Activated B cell treated with CpG ODN at 0.5 μM for 24 hours (primary cell): ENCODE measurements at regions of chr1 and their contacts with region 1.

Region 1: GRCh38 chr1:28934676-28935075 is 20.3 kb downstream of the EPB41 start:
- DNase-seq: no peak
- ATAC-seq: no peak
- H3K4me3 Mint-ChIP-seq: no peak overlapping the region
- H3K27ac Mint-ChIP-seq: peak overlapping the region; percentile 72
- H3K4me1 Mint-ChIP-seq: peaks cover 66% of the 10 kb centered on the region
- H3K27me3 Mint-ChIP-seq: no peaks in the 10 kb centered on the region
- CTCF ChIP-seq: no peak

Region 2: DNA sequence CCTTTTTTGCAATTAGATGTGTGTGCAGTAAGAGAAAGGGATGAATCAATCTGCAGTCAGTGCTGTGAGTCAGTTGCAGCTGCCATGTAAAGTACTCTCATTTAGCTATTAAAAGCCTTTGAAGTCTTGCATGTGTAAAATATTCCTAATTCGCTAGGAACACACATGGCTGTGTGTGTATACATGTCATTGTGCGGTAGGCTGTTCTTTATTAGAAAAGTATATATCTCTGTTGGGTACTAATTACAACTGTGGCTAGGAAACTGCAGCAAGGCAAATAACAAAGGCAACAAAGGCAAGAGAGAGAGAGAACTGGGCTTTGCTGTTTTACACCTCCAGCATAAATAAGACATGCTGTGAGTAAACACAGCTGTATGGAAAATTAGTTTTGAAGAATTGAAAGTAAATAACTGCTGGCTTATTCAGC is 21.4 kb after region 1 on chr1:
- CTCF ChIA-PET with region 1: no interaction called
- POLR2A ChIA-PET with region 1: no interaction called
- intact Hi-C with region 1: loop called (anchors 2 kb)
- DNase-seq: no peak
- ATAC-seq: no peak
- H3K4me3 Mint-ChIP-seq: no peak overlapping the region
- H3K27ac Mint-ChIP-seq: no peak overlapping the region
- H3K4me1 Mint-ChIP-seq: peaks cover 19% of the 10 kb centered on the region
- H3K27me3 Mint-ChIP-seq: no peaks in the 10 kb centered on the region
- CTCF ChIP-seq: no peak